GM12878 (cell line): ENCODE measurements at regions of chr2 and their contacts with region 1.

Region 1: GRCh38 chr2:168490015-168490874 is 34.2 kb downstream of the CERS6 start:
- DNase-seq: peak; percentile 92
- ATAC-seq: peak; percentile 95
- H3K4me3 ChIP-seq: peak overlapping the region; percentile 64
- H3K27ac ChIP-seq: peak overlapping the region; percentile 99
- H3K4me1 ChIP-seq: peaks cover 25% of the 10 kb centered on the region
- H3K27me3 ChIP-seq: no peaks in the 10 kb centered on the region
- CTCF ChIP-seq: no peak
- EP300 ChIP-seq: peak; percentile 85 to 87; a peak in 3 of 4 replicates
- POLR2A ChIP-seq: peak; percentile 42
- RAD21 ChIP-seq: peak; percentile 41; the same call in 1 of the 2 replicates

Region 2: GRCh38 chr2:166972418-166972817 is 1517.8 kb before region 1 on chr2:
- CTCF ChIA-PET with region 1: no interaction called
- POLR2A ChIA-PET with region 1: no interaction called
- RAD21 ChIA-PET with region 1: no interaction called
- SMC1A ChIA-PET with region 1: no interaction called
- in situ Hi-C with region 1: no loop called
- intact Hi-C with region 1: no loop called
- DNase-seq: no peak
- ATAC-seq: no peak
- H3K4me3 ChIP-seq: no peak overlapping the region
- H3K27ac ChIP-seq: no peak overlapping the region
- H3K4me1 ChIP-seq: no peaks in the 10 kb centered on the region
- H3K27me3 ChIP-seq: no peaks in the 10 kb centered on the region
- CTCF ChIP-seq: no peak
- EP300 ChIP-seq: no peak
- POLR2A ChIP-seq: no peak
- RAD21 ChIP-seq: no peak

Region 3: GRCh38 chr2:168424112-168424951 is 65.9 kb before region 1 on chr2:
- CTCF ChIA-PET with region 1: no interaction called
- POLR2A ChIA-PET with region 1: no interaction called
- RAD21 ChIA-PET with region 1: no interaction called
- SMC1A ChIA-PET with region 1: no interaction called
- in situ Hi-C with region 1: no loop called
- intact Hi-C with region 1: loop called (anchors 5 kb)
- DNase-seq: no peak
- ATAC-seq: peak; percentile 28; the same call in 1 of the 3 replicates
- H3K4me3 ChIP-seq: no peak overlapping the region
- H3K27ac ChIP-seq: no peak overlapping the region
- H3K4me1 ChIP-seq: no peaks in the 10 kb centered on the region; the same call in 1 of the 2 replicates
- H3K27me3 ChIP-seq: no peaks in the 10 kb centered on the region
- CTCF ChIP-seq: no peak
- EP300 ChIP-seq: no peak
- POLR2A ChIP-seq: no peak
- RAD21 ChIP-seq: no peak

Region 4: DNA sequence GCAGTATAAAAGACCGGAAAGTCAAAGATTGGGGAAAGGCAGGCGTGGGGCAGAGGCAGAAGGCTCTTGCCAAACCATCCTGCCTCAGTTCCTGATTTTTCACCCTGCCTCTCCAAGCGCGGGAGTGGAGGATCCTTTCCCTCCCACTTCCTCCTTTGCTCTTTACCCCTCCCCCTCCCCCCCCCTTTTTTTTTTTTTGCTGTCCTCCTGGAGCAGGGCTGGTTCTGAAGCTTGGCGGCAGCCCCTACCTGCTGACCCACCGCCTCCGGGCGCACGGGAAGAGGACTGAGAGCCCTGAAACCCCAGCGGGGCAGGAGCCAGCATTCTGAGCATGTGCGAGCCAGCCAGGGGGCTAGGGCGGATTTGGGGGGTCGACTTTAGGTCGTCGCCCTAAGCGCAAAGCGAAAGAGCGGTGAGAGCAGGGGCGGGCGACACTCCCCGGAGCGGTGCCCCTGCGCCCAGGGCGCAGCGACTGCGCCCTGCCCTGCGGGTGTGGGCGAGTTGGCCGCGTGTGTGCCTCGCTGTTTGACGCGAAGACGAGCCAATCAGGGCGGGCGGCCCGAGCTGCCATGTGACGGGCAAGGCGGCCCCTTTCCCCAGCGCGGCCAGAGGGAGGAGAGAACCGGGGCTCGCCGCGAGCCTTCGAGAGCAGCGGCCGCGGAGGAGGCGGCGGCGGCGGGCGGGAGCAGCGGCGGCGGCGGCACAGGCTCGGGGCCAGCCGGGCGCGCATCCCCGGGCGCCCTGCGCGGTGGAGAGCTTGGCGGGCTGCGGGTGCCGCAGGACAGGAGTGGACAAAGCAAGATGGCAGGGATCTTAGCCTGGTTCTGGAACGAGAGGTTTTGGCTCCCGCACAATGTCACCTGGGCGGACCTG is 34.4 kb before region 1 on chr2 and contains the start of gene CERS6:
- CTCF ChIA-PET with region 1: interaction called, 3 read pairs
- POLR2A ChIA-PET with region 1: no interaction called
- RAD21 ChIA-PET with region 1: interaction called, 7 read pairs
- SMC1A ChIA-PET with region 1: interaction called, 16 read pairs
- in situ Hi-C with region 1: no loop called
- intact Hi-C with region 1: loop called (anchors 2 kb)
- DNase-seq: peak; percentile 64
- ATAC-seq: peak; percentile 93
- H3K4me3 ChIP-seq: peak within 1 kb of the TSS; percentile 79
- H3K27ac ChIP-seq: peak within 1 kb of the TSS; percentile 91
- H3K4me1 ChIP-seq: peaks cover 13% of the 10 kb centered on the region
- H3K27me3 ChIP-seq: no peaks in the 10 kb centered on the region
- CTCF ChIP-seq: no peak
- EP300 ChIP-seq: no peak
- POLR2A ChIP-seq: peak; percentile 95
- RAD21 ChIP-seq: no peak
- polyA plus RNA-seq, gene CERS6: 1.3 to 2.5 TPM

Region 5: GRCh38 chr2:168552450-168552856 is 62.2 kb after region 1 on chr2:
- CTCF ChIA-PET with region 1: interaction called, 4 read pairs
- POLR2A ChIA-PET with region 1: no interaction called
- RAD21 ChIA-PET with region 1: interaction called, 4 read pairs
- SMC1A ChIA-PET with region 1: no interaction called
- in situ Hi-C with region 1: no loop called
- intact Hi-C with region 1: loop called (anchors 5 kb)
- DNase-seq: peak; percentile 63
- ATAC-seq: peak; percentile 100
- H3K4me3 ChIP-seq: no peak overlapping the region
- H3K27ac ChIP-seq: peak overlapping the region; percentile 56
- H3K4me1 ChIP-seq: peaks cover 9% of the 10 kb centered on the region; the same call in 1 of the 2 replicates
- H3K27me3 ChIP-seq: no peaks in the 10 kb centered on the region
- CTCF ChIP-seq: no peak
- EP300 ChIP-seq: peak; percentile 41 to 76; a peak in 3 of 4 replicates
- POLR2A ChIP-seq: no peak
- RAD21 ChIP-seq: no peak

Region 6: DNA sequence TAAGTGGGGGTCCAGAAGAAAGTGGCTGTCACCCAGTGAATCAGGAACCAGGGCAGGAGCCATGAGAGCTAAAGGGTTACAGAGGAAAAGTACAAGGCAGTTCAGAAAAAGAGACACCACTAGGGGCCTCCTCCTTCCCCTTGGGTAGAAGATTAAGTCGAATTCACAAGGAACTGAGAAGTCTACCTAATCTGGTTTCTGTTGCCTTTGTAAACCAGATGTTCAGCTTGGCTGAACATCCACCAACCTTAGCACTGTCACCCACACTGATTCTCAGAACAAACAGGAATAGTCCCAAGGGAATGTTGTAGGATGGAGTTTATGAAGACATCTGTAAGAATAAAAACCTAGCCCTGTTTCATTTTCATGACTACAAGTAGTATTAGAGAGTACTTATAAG is 221.8 kb after region 1 on chr2:
- CTCF ChIA-PET with region 1: interaction called, 5 read pairs
- POLR2A ChIA-PET with region 1: no interaction called
- RAD21 ChIA-PET with region 1: interaction called, 7 read pairs
- SMC1A ChIA-PET with region 1: interaction called, 5 read pairs
- in situ Hi-C with region 1: no loop called
- intact Hi-C with region 1: loop called (anchors 2 kb)
- DNase-seq: peak; percentile 91
- ATAC-seq: peak; percentile 97
- H3K4me3 ChIP-seq: no peak overlapping the region
- H3K27ac ChIP-seq: peak overlapping the region; percentile 62
- H3K4me1 ChIP-seq: peaks cover 16% of the 10 kb centered on the region
- H3K27me3 ChIP-seq: no peaks in the 10 kb centered on the region
- CTCF ChIP-seq: peak; percentile 38 to 52 (median 51); a peak in 5 of 6 replicates
- EP300 ChIP-seq: peak; percentile 62 to 78; a peak in 3 of 4 replicates
- POLR2A ChIP-seq: no peak
- RAD21 ChIP-seq: peak; percentile 47; the same call in 1 of the 2 replicates